Activated naive CD4-positive, alpha-beta T cell treated with anti-CD3 and anti-CD28 coated beads, Interleukin-2, amount 10 ng/mL, durations not matched to agents 7 days and 5 days (primary cell): ENCODE measurements at regions of chr9 and their contacts with region 1.

Region 1: DNA sequence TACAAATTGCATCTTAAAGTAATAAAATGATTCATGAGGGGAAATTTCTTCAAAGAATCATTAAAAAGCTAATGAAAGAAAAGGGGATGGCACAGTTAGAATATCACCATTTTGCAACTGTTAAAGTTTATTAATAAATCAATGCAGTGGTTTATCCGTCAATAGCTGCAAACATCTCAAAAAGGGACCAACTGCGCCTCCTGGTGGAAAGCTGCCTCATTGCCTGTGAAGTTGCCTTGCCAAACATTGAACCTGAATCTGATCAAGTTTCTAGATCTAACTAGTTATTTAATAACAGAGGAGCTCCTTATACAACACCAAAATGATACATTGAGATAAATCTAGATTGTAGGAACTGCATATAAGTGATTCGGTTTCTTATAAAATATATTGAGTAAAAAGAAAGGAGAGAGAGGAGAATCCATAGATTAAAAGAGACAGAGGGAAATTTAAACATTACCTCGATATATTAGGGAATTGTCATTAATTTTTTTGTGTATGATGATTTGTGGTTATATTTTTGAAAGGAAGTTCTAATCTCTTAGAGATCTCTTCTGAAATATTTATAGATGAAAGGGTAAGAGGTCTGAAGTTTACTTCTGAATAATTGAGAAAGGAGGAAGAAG is 6.9 kb upstream of the NDUFB6 start:
- DNase-seq: peak; percentile 88
- H3K4me3 Mint-ChIP-seq: no peak overlapping the region
- H3K27ac Mint-ChIP-seq: no peak overlapping the region
- H3K4me1 Mint-ChIP-seq: no peaks in the 10 kb centered on the region
- H3K27me3 Mint-ChIP-seq: peaks cover 5% of the 10 kb centered on the region

Region 2: GRCh38 chr9:32247168-32247567 is 332.7 kb before region 1 on chr9:
- CTCF ChIA-PET with region 1: no interaction called
- DNase-seq: no peak
- H3K4me3 Mint-ChIP-seq: no peak overlapping the region
- H3K27ac Mint-ChIP-seq: no peak overlapping the region
- H3K4me1 Mint-ChIP-seq: no peaks in the 10 kb centered on the region
- H3K27me3 Mint-ChIP-seq: no peaks in the 10 kb centered on the region

Region 3: DNA sequence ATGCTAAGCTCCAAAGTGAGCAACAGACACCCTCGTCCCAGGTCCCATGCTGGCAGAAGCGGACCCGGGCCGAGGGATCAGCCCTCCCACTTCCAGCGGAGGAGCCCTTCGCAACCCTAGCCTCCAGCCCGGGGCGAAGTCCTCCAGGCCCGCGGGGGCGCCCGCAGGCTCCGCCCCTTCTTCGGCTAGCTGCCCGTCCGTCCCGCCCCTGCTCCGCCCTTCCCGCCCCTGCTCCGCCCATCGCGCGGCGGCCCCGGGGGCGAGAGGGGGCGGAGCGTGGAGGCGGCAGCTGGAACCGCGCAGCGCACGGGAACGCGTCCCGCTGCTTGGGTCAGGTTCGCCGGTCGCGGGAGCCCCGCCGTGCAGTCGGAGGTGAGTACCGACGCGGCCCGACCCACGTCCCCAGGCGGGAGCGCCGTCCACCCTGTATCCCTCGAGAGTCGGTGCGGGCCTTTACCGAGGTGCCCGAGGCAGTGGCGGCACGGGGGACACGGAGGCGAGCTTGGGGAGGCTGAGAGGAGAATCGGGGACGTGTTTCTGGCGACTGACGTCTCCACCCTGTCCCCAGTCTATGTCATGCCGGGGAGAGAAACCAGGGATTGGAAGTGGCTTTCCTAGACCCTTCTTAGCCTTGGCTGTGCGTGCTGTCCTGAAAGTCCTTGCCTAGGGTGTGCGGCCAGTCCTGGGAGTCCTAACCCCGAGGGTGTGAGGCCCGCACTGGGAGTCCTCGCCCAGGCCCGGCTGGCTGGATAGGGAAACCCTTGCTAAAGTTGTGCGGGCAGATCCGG is 195.3 kb before region 1 on chr9 and contains the start of gene ACO1:
- CTCF ChIA-PET with region 1: interaction called, 421 read pairs
- DNase-seq: peak; percentile 90
- H3K4me3 Mint-ChIP-seq: peak within 1 kb of the TSS; percentile 78
- H3K27ac Mint-ChIP-seq: peak within 1 kb of the TSS; percentile 20
- H3K4me1 Mint-ChIP-seq: peaks cover 21% of the 10 kb centered on the region
- H3K27me3 Mint-ChIP-seq: peaks cover 37% of the 10 kb centered on the region

Region 4: DNA sequence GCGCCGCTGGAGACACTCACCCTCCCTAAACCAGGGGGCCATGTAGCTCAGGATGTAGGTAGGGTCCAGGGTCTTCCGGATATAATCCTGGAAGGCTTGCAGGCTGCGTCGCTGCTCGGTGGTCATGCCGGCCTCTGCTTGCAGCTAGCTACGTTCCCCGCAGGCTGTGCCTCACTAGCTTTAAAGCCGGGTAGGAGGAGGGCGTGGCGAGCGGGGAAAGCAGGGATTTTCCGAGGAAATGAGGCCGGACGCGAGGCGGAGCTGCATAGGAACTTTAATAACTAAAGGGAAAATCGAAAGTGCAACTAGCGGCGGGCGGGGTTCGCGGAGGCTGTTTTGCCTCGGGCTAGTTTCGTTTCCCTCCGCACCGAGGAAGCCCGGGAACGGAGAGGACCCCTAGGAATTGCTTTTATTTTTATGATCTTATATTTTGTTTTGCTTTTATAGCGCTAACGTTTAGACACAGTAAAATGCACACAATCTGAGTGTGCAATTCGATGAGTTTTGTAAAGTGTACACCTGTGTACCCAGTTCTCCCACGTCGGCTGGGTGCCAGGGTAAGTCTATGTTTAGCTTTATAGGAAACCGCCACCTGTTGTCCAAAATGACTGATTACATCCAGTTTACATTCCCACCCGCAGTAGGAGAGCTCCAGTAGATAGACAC is 53.6 kb before region 1 on chr9 and contains the start of gene RIGI:
- CTCF ChIA-PET with region 1: interaction called, 15 read pairs
- DNase-seq: peak; percentile 90
- H3K4me3 Mint-ChIP-seq: peak within 1 kb of the TSS; percentile 91
- H3K27ac Mint-ChIP-seq: peak within 1 kb of the TSS; percentile 94
- H3K4me1 Mint-ChIP-seq: peaks cover 48% of the 10 kb centered on the region
- H3K27me3 Mint-ChIP-seq: no peaks in the 10 kb centered on the region

Region 5: GRCh38 chr9:32725066-32725860 is 145.4 kb after region 1 on chr9:
- CTCF ChIA-PET with region 1: no interaction called
- DNase-seq: no peak
- H3K4me3 Mint-ChIP-seq: no peak overlapping the region
- H3K27ac Mint-ChIP-seq: no peak overlapping the region
- H3K4me1 Mint-ChIP-seq: no peaks in the 10 kb centered on the region
- H3K27me3 Mint-ChIP-seq: peaks cover 5% of the 10 kb centered on the region

Region 6: DNA sequence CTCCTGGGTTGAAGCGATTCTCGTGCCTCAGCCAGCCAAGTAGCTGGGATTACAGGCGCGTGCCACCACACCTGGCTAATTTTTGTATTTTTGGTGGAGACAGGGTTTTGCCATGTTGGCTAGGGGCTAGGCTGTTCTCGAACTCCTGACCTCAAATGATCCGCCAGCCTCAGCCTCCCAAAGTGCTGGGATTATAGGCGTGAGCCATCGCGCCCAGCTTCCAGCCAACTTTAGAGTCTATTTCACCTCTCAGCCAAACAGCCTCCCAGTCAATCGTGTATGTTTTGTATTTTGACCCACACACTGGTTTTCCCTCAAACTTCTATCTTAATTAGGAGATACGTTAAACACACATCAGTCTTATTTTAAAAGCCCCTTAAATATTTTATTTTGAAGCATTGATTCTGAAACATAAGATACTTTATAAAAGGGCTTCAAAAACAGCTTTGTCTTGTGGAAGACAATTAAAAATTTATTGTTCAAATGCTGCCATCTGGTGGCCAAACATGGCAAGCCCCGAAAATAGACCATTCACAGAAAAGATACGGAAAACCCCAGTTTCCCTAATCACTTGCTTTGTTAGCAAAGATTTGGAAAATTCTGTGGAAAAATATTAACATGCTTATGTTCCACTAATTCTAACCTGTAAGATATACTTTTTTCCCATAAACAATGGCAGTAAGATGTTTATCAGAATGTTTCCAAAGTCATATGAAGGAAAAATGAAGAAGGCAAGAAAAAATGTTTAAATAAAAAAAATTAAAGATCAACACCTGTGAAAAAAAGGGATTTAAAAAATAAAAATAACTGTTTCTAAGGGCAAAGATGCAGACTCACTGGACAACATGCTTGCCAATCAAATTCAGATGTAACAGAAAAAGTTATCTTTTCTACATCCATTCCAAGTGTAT is 388.5 kb after region 1 on chr9:
- CTCF ChIA-PET with region 1: interaction called, 47 read pairs
- DNase-seq: peak; percentile 64
- H3K4me3 Mint-ChIP-seq: no peak overlapping the region
- H3K27ac Mint-ChIP-seq: no peak overlapping the region
- H3K4me1 Mint-ChIP-seq: no peaks in the 10 kb centered on the region
- H3K27me3 Mint-ChIP-seq: no peaks in the 10 kb centered on the region